AG04450 (cell line): ENCODE measurements at regions of chr5 and their contacts with region 1.

Region 1: DNA sequence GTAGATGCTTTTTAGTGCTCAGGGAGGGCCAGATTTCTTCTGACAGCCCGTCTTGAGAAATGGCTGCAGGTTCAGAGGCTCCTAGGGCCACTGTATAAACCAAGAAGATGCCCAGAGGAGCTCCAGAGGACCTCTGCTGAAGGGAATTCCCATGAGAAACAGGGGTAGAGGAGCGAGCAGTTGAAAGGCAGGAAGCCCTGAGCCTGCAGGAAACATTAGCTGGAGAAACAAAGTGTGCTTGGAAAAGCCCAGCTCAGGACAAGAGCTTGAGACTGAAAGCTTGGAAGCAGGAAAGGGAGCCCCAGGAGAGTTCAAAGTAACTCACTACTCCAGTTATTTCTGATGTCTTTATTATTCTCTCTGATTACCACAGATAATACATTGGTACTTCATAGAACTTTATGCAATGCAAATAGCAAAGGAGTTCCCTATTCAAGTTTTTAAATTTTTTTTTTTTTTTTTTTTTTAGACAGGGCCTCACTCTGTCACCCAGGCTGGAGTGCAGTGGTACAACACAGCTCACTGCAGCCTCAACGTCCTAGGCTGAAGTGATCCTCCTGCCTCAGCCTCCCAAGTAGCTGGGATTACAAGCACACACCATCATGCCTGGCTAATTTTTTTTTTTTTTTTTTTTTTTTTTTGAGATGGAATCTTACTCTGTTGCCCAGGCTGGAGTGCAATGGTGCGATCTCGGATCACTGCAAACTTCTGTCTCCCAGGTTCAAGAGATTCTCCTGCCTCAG is 16.5 kb downstream of the HBEGF start:
- DNase-seq: no peak
- H3K4me3 ChIP-seq: no peak overlapping the region
- H3K27ac ChIP-seq: no peak overlapping the region
- H3K27me3 ChIP-seq: no peaks in the 10 kb centered on the region
- CTCF ChIP-seq: no peak

Region 2: GRCh38 chr5:140302786-140303639 is 26.9 kb before region 1 on chr5 and contains the start of gene PFDN1:
- CTCF ChIA-PET with region 1: interaction called, 4 read pairs
- POLR2A ChIA-PET with region 1: interaction called, 12 read pairs
- DNase-seq: peak; percentile 90
- H3K4me3 ChIP-seq: peak within 1 kb of the TSS; percentile 98
- H3K27ac ChIP-seq: peak within 1 kb of the TSS; percentile 57
- H3K27me3 ChIP-seq: no peaks in the 10 kb centered on the region
- CTCF ChIP-seq: no peak
- polyA plus RNA-seq, gene PFDN1: 112 TPM in 2 replicates

Region 3: GRCh38 chr5:140391312-140391711 is 61.4 kb after region 1 on chr5:
- CTCF ChIA-PET with region 1: no interaction called
- POLR2A ChIA-PET with region 1: no interaction called
- DNase-seq: no peak
- H3K4me3 ChIP-seq: no peak overlapping the region
- H3K27ac ChIP-seq: no peak overlapping the region
- H3K27me3 ChIP-seq: no peaks in the 10 kb centered on the region
- CTCF ChIP-seq: no peak